ENCODE measurements at regions of chr1 and their contacts with region 1.

Region 1: DNA sequence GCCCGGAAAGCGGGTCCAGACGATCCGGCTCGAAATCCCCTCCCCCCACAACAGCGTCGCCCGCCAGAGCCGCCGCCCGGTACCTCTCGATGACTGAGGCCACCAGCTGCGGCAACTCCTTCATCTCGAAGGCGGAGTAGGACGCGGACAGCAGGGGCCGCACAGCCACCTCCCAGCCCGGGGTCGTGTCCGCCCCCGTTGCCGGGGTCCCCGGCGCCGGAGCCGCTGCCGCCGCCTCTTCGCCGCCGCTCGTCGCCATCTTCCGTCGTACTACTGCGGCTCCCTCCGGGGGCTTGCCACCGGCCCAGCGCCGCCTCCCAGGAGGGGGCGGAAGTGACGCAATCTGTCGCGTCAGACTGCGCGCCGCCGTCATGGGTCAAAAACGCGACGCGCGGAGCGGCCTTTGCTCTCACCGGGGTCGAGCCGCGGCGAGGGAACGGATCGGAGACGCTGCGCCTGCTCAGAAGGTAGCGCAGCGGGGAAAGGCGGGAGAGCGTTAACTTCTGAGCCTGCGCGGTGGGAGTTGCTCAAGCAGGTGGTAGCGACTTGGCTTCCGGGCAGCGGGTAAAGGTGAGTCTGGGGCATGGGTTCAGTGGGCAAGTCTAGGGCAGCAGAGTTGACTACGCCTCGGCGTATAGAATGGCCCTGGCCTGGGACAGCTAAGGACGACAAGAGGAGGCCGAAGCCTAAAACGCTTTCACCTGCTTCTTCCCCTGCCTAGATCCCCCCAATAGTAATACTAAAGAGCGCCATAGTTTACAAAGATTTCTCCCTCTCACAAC is at the start of gene UBR4:
- DNase-seq: peak; percentile 97
- ATAC-seq: peak; percentile 94
- H3K4me3 Mint-ChIP-seq: peak within 1 kb of the TSS; percentile 96
- H3K27ac Mint-ChIP-seq: peak within 1 kb of the TSS; percentile 97
- H3K4me1 Mint-ChIP-seq: peaks cover 72% of the 10 kb centered on the region
- H3K27me3 Mint-ChIP-seq: no peaks in the 10 kb centered on the region
- total RNA-seq, gene UBR4: 117 to 125 TPM

Region 2: DNA sequence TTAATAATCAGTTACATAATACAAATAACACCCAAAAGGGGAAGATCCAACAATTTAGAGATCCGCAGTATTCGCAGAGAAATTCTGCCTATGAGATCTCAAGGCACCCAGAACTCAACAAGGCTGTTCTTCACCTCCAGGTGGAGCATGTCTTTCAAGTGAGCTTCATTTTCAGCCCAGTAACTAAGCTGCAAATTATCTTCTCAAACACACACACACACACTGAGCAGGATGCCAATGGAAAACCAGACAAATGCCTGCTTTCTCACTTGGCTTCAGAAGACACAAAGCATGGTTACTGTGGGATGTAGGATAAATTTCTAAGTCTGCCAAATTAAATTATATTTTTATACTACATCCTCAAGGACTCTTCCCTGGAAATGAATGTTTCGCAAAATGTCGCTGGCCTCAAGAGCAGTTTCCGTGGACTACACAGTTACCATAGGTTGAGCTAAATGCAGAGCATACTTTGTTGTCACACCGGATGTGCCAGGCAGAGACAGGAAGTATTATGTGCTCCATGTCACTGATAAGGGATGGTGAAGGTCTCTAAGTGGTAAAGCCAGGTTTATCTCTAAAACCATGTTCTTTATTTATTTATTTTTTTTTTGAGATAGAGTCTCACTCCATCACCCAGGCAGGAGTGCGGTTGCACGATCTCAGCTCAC is 30.4 kb before region 1 on chr1:
- CTCF ChIA-PET with region 1: interaction called, 11 read pairs
- POLR2A ChIA-PET with region 1: no interaction called
- DNase-seq: peak; percentile 64
- ATAC-seq: peak; percentile 83
- H3K4me3 Mint-ChIP-seq: no peak overlapping the region
- H3K27ac Mint-ChIP-seq: peak overlapping the region; percentile 86
- H3K4me1 Mint-ChIP-seq: peaks cover 28% of the 10 kb centered on the region
- H3K27me3 Mint-ChIP-seq: no peaks in the 10 kb centered on the region

Region 3: DNA sequence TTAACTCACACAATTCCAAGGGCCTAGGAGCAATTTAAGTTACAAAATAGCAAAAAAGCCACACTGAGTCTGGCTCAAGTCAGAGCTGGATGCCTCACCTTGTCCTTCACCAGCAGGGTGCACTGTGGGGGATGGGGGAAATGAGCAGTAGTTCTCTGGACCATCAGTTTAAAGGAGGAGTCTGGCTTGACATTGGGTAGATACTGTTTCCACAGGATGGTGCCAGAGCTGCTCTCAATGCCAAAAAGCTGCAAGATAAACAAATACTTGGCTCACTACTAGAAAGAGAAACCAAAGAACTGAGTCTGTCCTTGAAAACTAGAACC is 22.3 kb after region 1 on chr1:
- CTCF ChIA-PET with region 1: interaction called, 3 read pairs
- POLR2A ChIA-PET with region 1: interaction called, 10 read pairs
- DNase-seq: no peak
- ATAC-seq: no peak
- H3K4me3 Mint-ChIP-seq: no peak overlapping the region
- H3K27ac Mint-ChIP-seq: no peak overlapping the region
- H3K4me1 Mint-ChIP-seq: no peaks in the 10 kb centered on the region
- H3K27me3 Mint-ChIP-seq: no peaks in the 10 kb centered on the region

Region 4: DNA sequence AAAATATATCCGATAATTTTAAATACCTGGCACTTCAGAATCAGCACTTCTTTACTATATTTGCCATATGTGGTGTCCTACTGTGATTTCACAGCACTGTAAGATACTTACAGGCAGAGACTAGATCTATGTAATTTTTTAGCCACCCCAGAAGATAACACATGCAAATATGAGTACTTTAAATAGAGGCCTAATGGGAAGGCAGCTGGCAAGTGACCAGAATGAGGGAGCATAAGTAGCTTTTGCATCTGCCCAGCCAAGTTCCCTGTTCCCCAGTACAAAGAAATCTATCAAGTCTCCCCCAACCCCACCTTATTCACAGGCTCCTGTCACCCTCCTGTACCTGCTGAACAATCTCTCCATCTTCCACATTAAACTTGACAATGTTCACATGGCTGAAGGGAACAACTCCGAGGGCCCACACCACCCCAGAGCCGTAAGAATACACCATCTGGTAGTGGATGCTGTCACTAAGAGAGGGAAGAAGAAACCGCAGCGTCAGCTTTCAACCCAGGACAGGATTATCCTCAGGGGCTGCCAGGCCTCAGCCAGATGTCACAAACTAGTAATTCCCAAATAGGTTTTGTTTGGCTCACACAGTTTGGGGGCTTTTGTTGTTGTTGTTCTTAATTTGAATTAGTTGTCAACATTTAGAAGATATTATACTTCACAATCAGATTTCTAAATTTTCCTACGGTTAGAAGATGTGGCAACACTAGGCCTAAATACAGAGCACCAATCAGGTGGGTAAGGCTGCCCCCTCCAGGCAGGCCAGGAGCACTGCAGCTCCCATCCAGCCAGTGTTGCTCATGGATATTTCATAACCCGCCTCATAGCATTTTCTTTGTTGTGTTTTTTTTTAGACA is 30.7 kb after region 1 on chr1:
- CTCF ChIA-PET with region 1: interaction called, 11 read pairs
- POLR2A ChIA-PET with region 1: interaction called, 5 read pairs
- DNase-seq: peak; percentile 72
- ATAC-seq: peak; percentile 85
- H3K4me3 Mint-ChIP-seq: no peak overlapping the region
- H3K27ac Mint-ChIP-seq: peak overlapping the region; percentile 30
- H3K4me1 Mint-ChIP-seq: no peaks in the 10 kb centered on the region
- H3K27me3 Mint-ChIP-seq: no peaks in the 10 kb centered on the region

Region 5: GRCh38 chr1:19374083-19374801 is 164.1 kb after region 1 on chr1:
- CTCF ChIA-PET with region 1: no interaction called
- POLR2A ChIA-PET with region 1: no interaction called
- DNase-seq: no peak
- ATAC-seq: no peak
- H3K4me3 Mint-ChIP-seq: no peak overlapping the region
- H3K27ac Mint-ChIP-seq: no peak overlapping the region
- H3K4me1 Mint-ChIP-seq: no peaks in the 10 kb centered on the region
- H3K27me3 Mint-ChIP-seq: no peaks in the 10 kb centered on the region

Measured in activated CD8-positive, alpha-beta T cell treated with anti-CD3 and anti-CD28 coated beads, Interleukin-2, amount 10 ng/mL, durations not matched to agents 7 days and 5 days (primary cell).